ENCODE measurements at regions of chr3 and their contacts with region 1.

Region 1: DNA sequence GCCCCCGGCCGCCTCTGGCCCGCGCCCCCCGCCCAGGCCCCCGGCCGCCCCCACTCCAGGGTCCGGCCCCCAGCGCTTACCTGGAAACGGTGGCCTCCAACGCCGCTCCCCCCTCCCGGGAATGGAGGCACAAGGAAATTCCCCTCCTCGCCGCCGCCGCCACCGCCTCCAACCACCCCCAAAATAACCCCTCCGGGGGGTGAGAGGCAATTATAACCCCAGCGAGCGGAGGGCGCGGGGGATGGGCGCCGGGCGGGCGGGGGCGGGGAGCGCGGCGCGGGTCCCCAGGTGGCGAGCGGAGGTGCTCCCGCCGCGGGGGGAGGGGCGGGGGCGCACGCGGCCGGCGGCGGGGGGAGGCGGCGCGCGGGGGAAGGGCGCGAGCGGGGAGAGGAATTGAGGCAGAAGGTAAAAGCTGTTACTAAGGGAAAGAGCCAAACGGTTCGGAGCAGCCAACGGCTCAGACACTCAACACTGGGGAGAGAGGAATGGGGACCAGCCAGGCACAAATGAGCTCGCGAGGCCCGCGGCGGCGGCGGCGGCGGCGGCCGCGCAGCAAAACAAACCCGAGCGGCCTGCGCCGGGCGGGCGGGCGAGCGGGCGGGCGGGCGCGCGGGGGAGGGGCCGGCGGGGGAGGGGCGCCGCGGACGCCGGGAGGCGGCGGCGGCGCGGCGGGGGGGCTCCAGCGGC is at the start of gene TBL1XR1:
- DNase-seq: peak; percentile 91 to 95 (median 94)
- ATAC-seq: peak; percentile 73 to 86 (median 83)
- H3K4me3 ChIP-seq: peak within 1 kb of the TSS; percentile 57 to 78 (median 76)
- H3K27ac ChIP-seq: peak within 1 kb of the TSS; percentile 89 to 96 (median 96)
- H3K4me1 ChIP-seq: peaks cover 0 to 18% (median 5%) of the 10 kb centered on the region in 3 donors
- H3K27me3 ChIP-seq: no peaks in the 10 kb centered on the region
- CTCF ChIP-seq: no peak
- total RNA-seq, gene TBL1XR1: 42.2 to 93.0 (median 51.0) TPM

Region 2: DNA sequence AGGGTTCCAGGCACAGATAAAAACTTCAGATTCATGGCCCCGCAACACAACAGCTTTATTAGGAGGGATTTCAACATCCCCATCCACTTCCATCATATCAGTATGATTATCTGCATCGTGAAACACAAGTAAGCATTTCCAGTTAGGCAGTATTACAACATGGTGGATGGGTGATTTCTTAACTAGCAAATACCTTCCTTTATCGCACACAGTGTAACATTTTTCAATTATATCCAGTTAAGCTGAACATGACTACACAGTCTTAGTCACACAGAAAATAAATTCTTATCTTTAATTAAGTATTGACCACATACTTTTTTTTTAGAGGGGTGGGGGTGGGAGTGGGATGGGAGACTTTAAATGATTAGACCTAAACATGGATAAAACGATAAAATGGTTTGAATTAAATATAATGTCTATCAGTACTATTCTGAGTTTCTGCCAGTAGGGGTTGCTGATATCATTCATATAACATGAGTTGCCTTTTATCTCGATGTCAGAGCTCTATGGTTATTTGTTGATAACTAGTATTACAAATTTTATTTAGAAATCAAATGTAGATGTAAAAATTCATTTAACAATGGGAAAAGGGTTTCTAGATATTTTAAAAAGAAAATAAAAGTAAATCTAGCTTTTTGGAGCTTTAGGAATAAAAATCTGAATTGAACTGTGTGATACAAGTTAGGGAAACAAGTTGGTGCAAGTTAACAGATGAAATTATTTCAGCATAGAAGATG is 146.5 kb before region 1 on chr3:
- intact Hi-C with region 1: loop called in 1 of 3 experiments (anchors 10 kb)
- DNase-seq: no peak
- ATAC-seq: peak; percentile 67 to 92 (median 87)
- H3K4me3 ChIP-seq: no peak overlapping the region
- H3K27ac ChIP-seq: no peak overlapping the region
- H3K4me1 ChIP-seq: peaks cover 0 to 4% (median 0%) of the 10 kb centered on the region in 3 donors
- H3K27me3 ChIP-seq: no peaks in the 10 kb centered on the region
- CTCF ChIP-seq: peak in 3 of 4 donors; percentile 21 to 37 (median 27)

Region 3: DNA sequence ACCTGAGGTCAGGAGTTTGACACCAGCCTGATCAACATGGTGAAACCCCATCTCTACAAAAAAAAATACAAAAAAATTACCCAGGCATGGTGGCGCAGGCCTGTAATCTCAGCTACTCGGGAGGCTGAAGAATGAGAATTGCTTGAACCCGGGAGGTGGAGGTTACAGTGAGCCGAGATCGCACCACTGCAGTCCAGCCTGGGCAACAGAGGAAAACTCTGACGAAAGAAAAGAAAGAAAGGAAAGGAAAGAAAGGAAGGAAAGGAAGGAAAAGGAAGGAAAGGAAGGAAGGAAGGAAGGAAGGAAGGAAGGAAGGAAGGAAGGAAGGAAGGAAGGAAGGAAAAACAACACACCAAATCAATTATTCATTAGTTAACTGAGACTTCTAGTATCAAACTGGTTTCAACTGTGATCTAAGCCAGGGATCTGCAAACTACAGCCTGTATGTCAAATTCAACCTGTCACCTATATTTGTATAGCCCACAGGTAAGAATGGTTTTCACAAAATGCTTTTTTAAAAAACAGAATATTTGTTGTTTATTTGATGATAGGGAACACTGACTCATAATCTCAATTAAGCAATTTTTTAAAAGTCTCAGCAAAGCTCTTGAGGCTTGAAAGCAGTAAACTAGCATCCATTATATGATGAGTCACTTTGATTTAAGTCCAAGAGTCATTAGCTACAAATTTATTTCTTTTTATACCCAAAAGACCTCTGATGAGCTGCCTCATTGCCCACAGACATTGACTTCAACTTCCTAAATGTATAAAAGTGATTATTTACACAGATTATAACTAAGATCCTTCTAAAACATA is 127.5 kb before region 1 on chr3:
- intact Hi-C with region 1: loop called in 1 of 3 experiments (anchors 10 kb)
- DNase-seq: no peak
- ATAC-seq: peak in 1 of 4 donors; percentile 22
- H3K4me3 ChIP-seq: no peak overlapping the region
- H3K27ac ChIP-seq: no peak overlapping the region
- H3K4me1 ChIP-seq: peaks cover 0 to 3% (median 0%) of the 10 kb centered on the region in 3 donors
- H3K27me3 ChIP-seq: no peaks in the 10 kb centered on the region
- CTCF ChIP-seq: no peak

Region 4: GRCh38 chr3:177359593-177360357 is 162.6 kb after region 1 on chr3:
- intact Hi-C with region 1: loop called in 2 of 3 experiments (anchors 2 to 5 kb)
- DNase-seq: peak; percentile 94 to 99 (median 96)
- ATAC-seq: peak; percentile 87 to 96 (median 93)
- H3K4me3 ChIP-seq: peak overlapping the region in 3 of 4 donors; percentile 3 to 42 (median 40)
- H3K27ac ChIP-seq: peak overlapping the region; percentile 64 to 93 (median 80)
- H3K4me1 ChIP-seq: peaks cover 15 to 35% (median 32%) of the 10 kb centered on the region in 3 donors
- H3K27me3 ChIP-seq: no peaks in the 10 kb centered on the region
- CTCF ChIP-seq: no peak